PC-9 (cell line): ENCODE measurements at regions of chr2 and their contacts with region 1.

Region 1: DNA sequence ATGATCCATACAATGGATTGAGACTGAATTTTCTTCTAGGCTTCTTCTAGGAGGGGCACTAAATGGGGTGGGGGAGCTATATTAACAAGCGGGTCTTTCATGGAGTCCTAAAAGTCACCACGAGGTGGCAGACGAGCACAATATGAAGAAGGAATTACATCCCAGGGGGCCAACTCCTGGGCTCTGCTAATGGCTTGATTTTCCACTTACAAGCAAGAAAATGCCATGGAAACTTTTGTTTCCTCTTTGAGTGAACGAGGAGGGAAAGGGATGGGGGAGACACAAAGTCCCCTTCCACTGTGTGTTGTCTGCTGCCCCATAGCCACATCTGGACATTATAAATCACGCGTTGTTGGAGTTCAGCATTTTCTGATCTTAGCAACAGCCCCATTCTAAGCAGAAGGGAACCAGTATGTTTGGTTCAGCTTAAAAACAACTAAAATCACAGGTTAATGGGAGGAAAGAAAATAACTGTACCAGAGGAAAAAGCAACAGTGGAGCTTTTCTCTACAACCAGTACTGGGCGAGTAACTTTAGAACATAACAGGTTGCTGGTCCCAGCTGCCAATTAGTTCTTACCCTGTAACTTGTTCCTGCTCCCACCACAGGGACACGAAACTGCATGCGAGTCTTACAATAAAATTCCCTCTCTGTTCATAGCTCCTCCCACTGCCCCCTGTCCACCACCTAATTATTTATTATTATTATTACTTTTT is 285.0 kb upstream of the PARD3B start:
- DNase-seq: peak; percentile 24 to 35
- H3K4me3 ChIP-seq: no peak overlapping the region
- H3K27ac ChIP-seq: no peak overlapping the region
- H3K4me1 ChIP-seq: no peaks in the 10 kb centered on the region
- H3K27me3 ChIP-seq: no peaks in the 10 kb centered on the region
- CTCF ChIP-seq: peak; percentile 81

Region 2: DNA sequence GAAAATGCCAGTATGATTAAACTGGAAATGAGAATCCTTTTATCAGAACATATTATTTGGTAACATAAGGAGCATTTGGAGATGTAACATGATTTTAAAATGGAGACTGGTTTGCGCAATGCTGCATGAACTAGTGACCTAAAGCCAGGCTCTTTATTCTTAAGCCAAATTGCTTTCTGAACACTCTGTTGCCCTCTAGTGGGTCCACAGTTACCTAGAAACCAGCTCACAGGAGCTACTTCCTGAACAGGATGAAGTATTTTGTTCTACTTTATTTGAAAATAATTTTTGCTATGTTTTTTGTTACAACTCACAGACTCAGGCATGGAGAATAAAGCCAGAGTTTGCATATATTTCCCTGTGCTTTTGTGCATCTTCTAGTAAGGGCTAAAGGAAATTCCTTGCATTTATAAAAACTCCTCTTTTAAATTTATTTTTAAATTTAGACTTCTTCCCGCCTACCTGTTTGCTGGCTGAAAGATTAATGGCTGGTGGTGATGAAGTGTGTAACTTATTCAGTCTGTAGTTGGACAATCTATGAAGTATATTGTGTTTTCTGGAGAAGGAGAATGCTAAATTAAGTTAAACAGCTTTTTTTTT is 431.7 kb after region 1 on chr2:
- CTCF ChIA-PET with region 1: no interaction called
- POLR2A ChIA-PET with region 1: no interaction called
- intact Hi-C with region 1: loop called (anchors 2 kb)
- DNase-seq: peak; percentile 10 to 58
- H3K4me3 ChIP-seq: no peak overlapping the region
- H3K27ac ChIP-seq: no peak overlapping the region
- H3K4me1 ChIP-seq: no peaks in the 10 kb centered on the region
- H3K27me3 ChIP-seq: no peaks in the 10 kb centered on the region
- CTCF ChIP-seq: peak; percentile 70

Region 3: DNA sequence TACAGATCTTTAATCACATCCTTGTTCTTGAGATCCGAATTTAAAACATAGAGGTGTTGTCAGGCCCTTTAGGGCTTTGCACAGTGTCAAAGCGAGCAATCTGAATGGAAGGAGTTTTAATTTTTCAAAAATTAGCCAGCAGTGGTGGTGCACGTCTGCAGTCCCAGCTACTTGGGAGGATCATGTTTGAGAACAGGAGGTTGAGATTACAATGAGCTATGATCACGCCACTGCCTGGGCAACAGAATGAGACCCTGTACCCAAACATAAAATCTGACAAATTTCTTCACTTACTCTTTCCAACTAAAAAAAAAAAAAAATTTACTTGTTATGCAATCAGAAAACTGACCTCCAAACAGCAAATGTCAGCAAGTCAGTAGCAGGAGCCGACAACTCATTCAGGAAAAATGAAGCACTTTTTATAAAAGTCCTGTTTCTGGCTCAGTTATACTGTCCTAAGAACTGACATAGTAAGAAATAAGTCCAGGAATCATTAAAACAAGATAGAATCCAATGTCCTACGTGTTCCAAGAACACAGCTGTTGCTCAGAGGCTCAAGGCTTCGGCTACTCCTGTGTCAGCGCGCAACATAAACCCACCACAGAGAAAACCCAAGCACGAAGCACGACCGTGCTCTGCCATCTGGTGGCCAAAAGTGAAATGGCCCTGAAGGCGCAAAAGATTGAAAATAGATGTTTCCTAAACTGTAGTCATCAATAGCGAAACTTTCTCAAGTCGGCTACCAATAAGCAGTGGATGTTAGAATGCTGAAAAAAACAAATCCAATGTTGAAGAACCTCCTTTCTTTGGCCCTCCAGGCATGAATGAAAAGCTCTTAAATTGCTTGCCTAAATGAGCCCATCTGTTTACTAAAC is 1687.5 kb after region 1 on chr2:
- CTCF ChIA-PET with region 1: no interaction called
- POLR2A ChIA-PET with region 1: no interaction called
- intact Hi-C with region 1: loop called (anchors 5 kb)
- DNase-seq: peak in 1 of 2 experiments; percentile 41
- H3K4me3 ChIP-seq: peak overlapping the region; percentile 14; the same call in 1 of the 2 replicates
- H3K27ac ChIP-seq: no peak overlapping the region
- H3K4me1 ChIP-seq: no peaks in the 10 kb centered on the region
- H3K27me3 ChIP-seq: no peaks in the 10 kb centered on the region
- CTCF ChIP-seq: peak; percentile 87